CD4-positive, alpha-beta T cell (primary cell): ENCODE measurements at regions of chr5 and their contacts with region 1.

Region 1: GRCh38 chr5:179821581-179822432 is 1.1 kb downstream of the SQSTM1 start:
- DNase-seq: peak; percentile 69 to 95 (median 84)
- ATAC-seq: peak; percentile 66
- H3K4me3 ChIP-seq: peak overlapping the region; percentile 83
- H3K4me3 Mint-ChIP-seq: peak overlapping the region; percentile 99
- H3K27ac ChIP-seq: peak overlapping the region; percentile 84 to 96
- H3K27ac Mint-ChIP-seq: peak overlapping the region; percentile 99
- H3K4me1 ChIP-seq: peaks cover 64% of the 10 kb centered on the region
- H3K4me1 Mint-ChIP-seq: peaks cover 61% of the 10 kb centered on the region
- H3K27me3 ChIP-seq: peaks cover 0 to 4% of the 10 kb centered on the region in 2 experiments
- H3K27me3 Mint-ChIP-seq: no peaks in the 10 kb centered on the region
- CTCF ChIP-seq: no peak

Region 2: DNA sequence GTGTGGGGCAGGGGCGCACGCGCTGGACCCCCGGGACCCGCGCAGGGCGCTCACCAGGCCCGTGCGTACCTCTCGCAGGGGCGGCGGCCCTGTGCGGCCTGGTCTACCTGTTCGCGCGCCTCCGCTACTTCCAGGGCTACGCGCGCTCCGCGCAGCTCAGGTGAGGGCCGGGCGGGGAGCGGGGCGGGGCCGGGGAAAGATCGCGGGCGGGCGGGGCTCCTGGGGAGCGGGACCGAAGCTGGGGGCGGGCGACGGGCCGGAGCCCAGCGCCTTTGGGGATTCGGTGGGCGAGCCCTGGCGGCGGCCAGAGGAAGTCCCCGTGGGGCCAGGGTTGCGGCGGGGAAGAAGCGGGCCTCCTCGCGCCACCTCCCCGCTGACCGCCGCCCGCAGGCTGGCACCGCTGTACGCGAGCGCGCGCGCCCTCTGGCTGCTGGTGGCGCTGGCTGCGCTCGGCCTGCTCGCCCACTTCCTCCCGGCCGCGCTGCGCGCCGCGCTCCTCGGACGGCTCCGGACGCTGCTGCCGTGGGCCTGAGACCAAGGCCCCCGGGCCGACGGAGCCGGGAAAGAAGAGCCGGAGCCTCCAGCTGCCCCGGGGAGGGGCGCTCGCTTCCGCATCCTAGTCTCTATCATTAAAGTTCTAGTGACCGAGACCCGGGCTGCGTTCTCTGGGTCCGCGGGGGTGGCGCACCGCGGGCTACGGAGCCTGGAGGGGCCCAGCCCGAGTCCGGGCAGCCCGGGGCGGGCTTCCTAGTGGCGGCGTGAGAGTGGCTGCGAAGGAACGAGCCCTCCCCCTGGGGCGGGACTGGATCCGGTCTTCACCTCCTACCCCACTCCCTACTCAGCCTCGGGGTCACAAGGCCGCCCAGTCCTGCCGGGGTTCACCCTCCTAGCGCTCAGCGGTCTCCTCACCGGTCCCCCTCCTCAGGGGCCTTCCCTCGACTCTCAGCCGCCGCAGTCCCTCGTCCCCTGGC is 25.7 kb before region 1 on chr5:
- CTCF ChIA-PET with region 1: interaction called, 6 read pairs
- POLR2A ChIA-PET with region 1: interaction called, 23 read pairs
- intact Hi-C with region 1: no loop called
- DNase-seq: peak; percentile 53 to 89 (median 69)
- ATAC-seq: peak; percentile 70
- H3K4me3 ChIP-seq: peak overlapping the region; percentile 43
- H3K4me3 Mint-ChIP-seq: peak overlapping the region; percentile 83
- H3K27ac ChIP-seq: peak overlapping the region in 1 of 2 donors; percentile 13
- H3K27ac Mint-ChIP-seq: peak overlapping the region; percentile 44
- H3K4me1 ChIP-seq: peaks cover 38% of the 10 kb centered on the region
- H3K4me1 Mint-ChIP-seq: peaks cover 40% of the 10 kb centered on the region
- H3K27me3 ChIP-seq: no peaks in the 10 kb centered on the region
- H3K27me3 Mint-ChIP-seq: no peaks in the 10 kb centered on the region
- CTCF ChIP-seq: peak; percentile 74

Region 3: GRCh38 chr5:179836225-179837019 is 14.6 kb after region 1 on chr5:
- CTCF ChIA-PET with region 1: no interaction called
- POLR2A ChIA-PET with region 1: interaction called, 10 read pairs
- intact Hi-C with region 1: no loop called
- DNase-seq: peak in 13 of 14 experiments; percentile 39 to 84 (median 59)
- ATAC-seq: peak; percentile 88
- H3K4me3 ChIP-seq: peak overlapping the region; percentile 12
- H3K4me3 Mint-ChIP-seq: peak overlapping the region; percentile 72
- H3K27ac ChIP-seq: peak overlapping the region; percentile 41 to 72
- H3K27ac Mint-ChIP-seq: peak overlapping the region; percentile 81
- H3K4me1 ChIP-seq: peaks cover 20% of the 10 kb centered on the region
- H3K4me1 Mint-ChIP-seq: peaks cover 14% of the 10 kb centered on the region
- H3K27me3 ChIP-seq: no peaks in the 10 kb centered on the region
- H3K27me3 Mint-ChIP-seq: no peaks in the 10 kb centered on the region
- CTCF ChIP-seq: no peak

Region 4: GRCh38 chr5:179858586-179859427 is 37.0 kb after region 1 on chr5 and contains the start of gene MRNIP:
- CTCF ChIA-PET with region 1: no interaction called
- POLR2A ChIA-PET with region 1: interaction called, 14 read pairs
- intact Hi-C with region 1: loop called (anchors 1 to 5 kb)
- DNase-seq: peak; percentile 80 to 94 (median 88)
- ATAC-seq: peak; percentile 96
- H3K4me3 ChIP-seq: peak within 1 kb of the TSS; percentile 74
- H3K4me3 Mint-ChIP-seq: peak within 1 kb of the TSS; percentile 96
- H3K27ac ChIP-seq: peak within 1 kb of the TSS; percentile 34 to 61
- H3K27ac Mint-ChIP-seq: peak within 1 kb of the TSS; percentile 94
- H3K4me1 ChIP-seq: peaks cover 22% of the 10 kb centered on the region
- H3K4me1 Mint-ChIP-seq: peaks cover 17% of the 10 kb centered on the region
- H3K27me3 ChIP-seq: no peaks in the 10 kb centered on the region
- H3K27me3 Mint-ChIP-seq: no peaks in the 10 kb centered on the region
- CTCF ChIP-seq: no peak
- total RNA-seq, gene MRNIP: 31.8 to 32.8 TPM

Region 5: DNA sequence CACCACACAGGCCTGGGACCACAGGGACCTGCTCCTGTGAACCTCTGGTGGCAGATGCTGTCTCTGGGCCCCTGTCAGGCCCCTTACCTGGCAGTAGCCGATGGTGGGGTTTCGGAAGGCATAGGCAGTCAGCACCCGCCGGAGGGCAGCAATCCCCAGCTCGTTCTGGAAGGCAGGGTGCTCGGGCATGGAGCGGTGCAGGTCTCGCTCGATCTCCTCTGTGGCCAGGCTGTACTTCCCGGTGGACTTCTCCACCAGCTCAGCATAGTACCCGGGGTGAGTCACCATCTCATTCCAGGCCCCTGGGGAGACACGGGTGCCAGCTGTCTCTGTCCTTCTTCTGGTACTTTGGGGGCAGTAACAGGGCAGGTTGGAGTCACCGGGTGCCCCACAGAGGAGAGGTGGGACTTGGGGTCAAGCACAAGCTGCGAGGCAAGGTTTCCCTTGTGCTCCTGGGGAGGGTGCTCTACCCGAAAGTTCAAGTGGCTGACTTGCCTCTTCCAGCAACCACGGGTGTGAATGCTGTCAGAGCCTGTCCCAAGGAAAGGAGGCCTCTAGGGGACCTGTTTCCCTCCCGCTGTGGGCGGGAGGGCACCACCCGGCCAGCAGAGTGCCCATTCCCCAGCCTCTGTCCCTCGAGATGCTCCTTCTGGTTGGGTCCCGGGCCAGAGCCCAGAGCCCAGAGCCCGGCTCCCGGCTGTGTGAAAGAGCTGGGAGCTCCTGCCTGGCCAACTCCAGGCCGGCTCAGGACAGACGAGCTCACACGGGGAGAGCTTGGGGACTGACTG is 56.6 kb after region 1 on chr5:
- CTCF ChIA-PET with region 1: no interaction called
- POLR2A ChIA-PET with region 1: no interaction called
- intact Hi-C with region 1: no loop called
- DNase-seq: no peak
- ATAC-seq: no peak
- H3K4me3 ChIP-seq: no peak overlapping the region
- H3K4me3 Mint-ChIP-seq: no peak overlapping the region
- H3K27ac ChIP-seq: no peak overlapping the region
- H3K27ac Mint-ChIP-seq: no peak overlapping the region
- H3K4me1 ChIP-seq: no peaks in the 10 kb centered on the region
- H3K4me1 Mint-ChIP-seq: no peaks in the 10 kb centered on the region
- H3K27me3 ChIP-seq: no peaks in the 10 kb centered on the region
- H3K27me3 Mint-ChIP-seq: no peaks in the 10 kb centered on the region
- CTCF ChIP-seq: no peak

Region 6: DNA sequence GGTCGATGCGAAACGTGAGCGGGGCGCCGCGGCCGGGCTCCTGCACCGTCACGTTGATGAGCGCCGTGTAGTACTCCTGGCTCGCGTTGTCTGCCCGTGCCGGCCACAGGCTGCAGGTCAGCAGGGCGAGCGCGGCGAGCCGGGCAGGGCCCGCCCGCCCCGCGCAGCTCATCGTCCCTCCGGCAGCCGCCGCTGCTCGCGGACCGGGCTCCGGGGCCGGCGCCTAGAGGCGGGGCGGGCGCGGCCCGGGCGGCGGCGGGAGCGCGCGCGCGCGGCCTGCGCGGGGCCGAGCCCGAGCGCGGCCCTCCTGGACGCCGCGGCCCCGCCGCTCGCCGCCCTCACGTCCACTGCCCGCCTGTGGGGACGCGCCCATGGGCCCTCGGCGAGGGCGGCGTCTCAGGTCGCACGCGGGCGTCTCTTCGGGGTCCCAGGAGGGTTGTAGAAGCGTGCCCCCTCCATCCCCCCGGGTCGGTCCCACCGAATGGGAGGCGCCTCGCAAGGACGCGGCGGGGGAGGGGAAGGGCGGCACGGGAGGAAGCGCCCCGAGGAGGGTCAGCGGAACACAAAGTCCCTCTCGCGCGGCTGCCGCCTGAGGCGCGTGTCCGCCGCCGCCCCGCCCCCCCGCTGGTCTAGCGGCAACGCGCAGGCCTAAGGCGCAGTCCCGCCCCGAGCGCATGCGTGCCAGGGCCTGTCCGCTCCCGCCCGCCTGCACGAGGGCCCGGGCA is 249.9 kb after region 1 on chr5 and contains the start of gene RNF130:
- CTCF ChIA-PET with region 1: no interaction called
- POLR2A ChIA-PET with region 1: no interaction called
- intact Hi-C with region 1: no loop called
- DNase-seq: peak; percentile 61 to 92 (median 81)
- ATAC-seq: peak; percentile 66
- H3K4me3 ChIP-seq: peak within 1 kb of the TSS; percentile 65
- H3K4me3 Mint-ChIP-seq: peak within 1 kb of the TSS; percentile 89
- H3K27ac ChIP-seq: peak within 1 kb of the TSS in 1 of 2 donors; percentile 62
- H3K27ac Mint-ChIP-seq: peak within 1 kb of the TSS; percentile 80
- H3K4me1 ChIP-seq: peaks cover 22% of the 10 kb centered on the region
- H3K4me1 Mint-ChIP-seq: peaks cover 38% of the 10 kb centered on the region
- H3K27me3 ChIP-seq: no peaks in the 10 kb centered on the region
- H3K27me3 Mint-ChIP-seq: no peaks in the 10 kb centered on the region
- CTCF ChIP-seq: no peak
- total RNA-seq, gene RNF130: 18.2 to 19.1 TPM